ENCODE measurements at regions of chr17 and their contacts with region 1.

Region 1: DNA sequence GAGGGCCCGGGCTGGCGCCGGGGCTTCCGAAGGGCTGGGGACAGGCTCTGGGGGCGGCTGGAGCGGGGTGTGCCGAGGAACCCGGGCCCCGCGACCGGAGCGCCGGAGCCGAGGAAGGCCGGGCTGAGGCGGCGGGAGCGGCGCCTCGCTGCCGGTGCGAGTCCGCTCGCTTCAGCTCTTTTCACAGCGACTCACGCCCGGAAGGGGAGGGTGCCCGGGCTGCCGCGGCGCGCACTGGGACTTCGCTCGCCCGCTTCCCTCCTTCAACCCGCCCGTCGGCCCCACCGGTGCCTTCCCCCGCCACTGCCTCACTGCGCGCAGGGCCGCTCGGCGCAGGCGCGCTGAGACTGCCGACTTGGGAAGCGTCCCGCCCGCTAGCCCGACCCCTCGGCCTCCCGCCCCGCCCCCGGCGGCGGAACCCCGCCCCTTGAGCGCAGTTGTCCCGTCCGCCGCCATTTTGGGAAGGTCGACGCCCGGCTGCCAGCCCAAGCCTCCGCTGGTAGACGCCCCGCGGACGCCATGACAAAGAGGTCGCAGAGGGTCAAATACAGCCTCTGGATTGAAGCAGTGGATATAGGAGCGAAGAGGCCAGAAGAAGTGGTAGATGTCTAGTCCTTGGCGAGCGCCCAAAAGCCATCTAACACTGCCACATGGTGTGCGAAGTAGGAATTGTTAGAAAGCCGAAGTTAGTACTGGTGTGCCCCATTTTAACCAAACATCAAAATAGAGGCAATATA is at the start of gene UBE2G1:
- DNase-seq: peak; percentile 88 to 98
- H3K4me3 ChIP-seq: peak within 1 kb of the TSS; percentile 72
- H3K27ac ChIP-seq: peak within 1 kb of the TSS; percentile 60
- H3K4me1 ChIP-seq: peaks cover 17% of the 10 kb centered on the region
- H3K27me3 ChIP-seq: no peaks in the 10 kb centered on the region
- CTCF ChIP-seq: peak; percentile 41
- total RNA-seq, gene UBE2G1: 104 and 111 TPM in 2 replicates

Region 2: GRCh38 chr17:4304417-4305027 is 62.0 kb before region 1 on chr17:
- CTCF ChIA-PET with region 1: no interaction called
- POLR2A ChIA-PET with region 1: no interaction called
- intact Hi-C with region 1: loop called (anchors 10 kb)
- DNase-seq: peak in 1 of 2 experiments; percentile 11
- H3K4me3 ChIP-seq: no peak overlapping the region
- H3K27ac ChIP-seq: no peak overlapping the region
- H3K4me1 ChIP-seq: no peaks in the 10 kb centered on the region
- H3K27me3 ChIP-seq: no peaks in the 10 kb centered on the region
- CTCF ChIP-seq: peak; percentile 84

Region 3: GRCh38 chr17:4317610-4318009 is 48.9 kb before region 1 on chr17:
- CTCF ChIA-PET with region 1: no interaction called
- POLR2A ChIA-PET with region 1: no interaction called
- intact Hi-C with region 1: no loop called
- DNase-seq: no peak
- H3K4me3 ChIP-seq: no peak overlapping the region
- H3K27ac ChIP-seq: no peak overlapping the region
- H3K4me1 ChIP-seq: peaks cover 9% of the 10 kb centered on the region
- H3K27me3 ChIP-seq: no peaks in the 10 kb centered on the region
- CTCF ChIP-seq: no peak

Region 4: DNA sequence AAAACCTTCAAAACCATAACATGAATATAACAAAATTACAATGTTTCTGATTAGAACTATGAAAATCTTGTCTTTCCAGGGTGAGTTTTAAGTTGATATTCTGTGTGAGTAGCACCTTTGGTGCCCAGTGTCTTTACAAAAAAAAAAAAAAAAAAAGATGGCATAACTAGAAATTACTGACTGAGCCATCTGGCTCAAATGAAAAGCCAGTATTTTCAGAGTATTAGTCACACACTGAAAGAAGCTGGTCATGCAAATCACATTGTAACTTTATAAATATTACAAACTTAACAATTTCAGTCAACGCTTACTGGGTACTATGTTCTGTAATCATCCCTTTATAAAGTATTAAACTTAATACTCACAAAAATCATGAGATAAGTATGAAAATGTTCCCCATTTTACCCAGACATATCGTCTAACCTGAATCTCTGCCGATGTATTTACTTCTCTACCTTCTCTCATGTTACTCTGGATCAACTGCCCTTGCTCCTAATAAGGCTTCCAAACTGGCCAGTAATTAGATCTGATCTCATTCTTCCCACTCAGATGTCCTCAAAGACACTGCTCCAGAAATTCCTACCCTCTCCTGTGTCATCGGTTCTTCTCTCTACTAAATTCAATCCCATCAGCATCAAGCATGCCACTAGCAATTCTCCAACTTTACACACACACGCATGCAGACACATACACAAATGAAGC is 25.4 kb before region 1 on chr17:
- CTCF ChIA-PET with region 1: no interaction called
- POLR2A ChIA-PET with region 1: no interaction called
- intact Hi-C with region 1: no loop called
- DNase-seq: no peak
- H3K4me3 ChIP-seq: no peak overlapping the region
- H3K27ac ChIP-seq: no peak overlapping the region
- H3K4me1 ChIP-seq: peaks cover 12% of the 10 kb centered on the region
- H3K27me3 ChIP-seq: no peaks in the 10 kb centered on the region
- CTCF ChIP-seq: no peak

Region 5: DNA sequence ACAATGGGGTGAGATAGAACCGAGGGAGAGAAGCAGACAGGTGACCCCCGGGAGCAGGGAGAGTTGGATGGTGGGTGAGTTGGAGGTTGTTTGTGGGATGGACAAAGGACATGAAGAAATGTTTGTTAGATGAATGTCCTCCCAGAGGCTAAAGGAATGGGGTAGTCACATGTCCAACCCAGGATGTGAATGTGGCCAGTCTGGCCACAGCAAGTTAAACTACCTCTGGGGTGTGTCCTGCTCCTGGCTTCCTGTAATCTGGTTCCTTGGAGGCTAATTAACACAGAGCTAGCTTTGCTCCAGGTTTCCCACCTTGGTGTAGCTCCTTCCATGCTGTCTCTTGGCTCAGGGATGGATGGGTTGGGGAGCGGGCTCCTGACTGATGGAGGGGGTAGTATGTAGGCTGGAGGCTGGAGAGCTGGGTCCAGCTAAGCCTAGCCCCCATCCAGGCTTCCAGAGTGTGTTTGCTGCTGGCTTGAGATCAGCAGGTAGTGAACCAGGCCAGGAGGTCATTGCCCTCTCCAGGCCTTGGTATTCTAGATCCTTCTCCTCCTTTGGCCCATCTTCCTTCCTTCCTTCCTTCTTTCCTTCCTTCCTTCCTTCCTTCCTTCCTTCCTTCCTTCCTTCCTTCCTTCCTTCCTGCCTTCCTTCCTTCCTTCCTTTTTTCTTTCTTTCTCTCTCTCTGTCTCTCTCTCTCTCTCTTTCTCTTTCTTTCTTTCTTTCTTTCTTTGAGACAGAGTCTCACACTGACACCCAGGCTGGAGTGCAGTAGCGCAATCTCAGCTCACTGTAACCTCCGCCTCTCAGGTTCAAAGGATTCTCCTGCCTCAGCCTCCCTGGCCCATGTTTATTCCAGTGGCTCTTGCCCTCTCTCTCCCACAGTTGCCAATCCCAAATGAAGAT is 28.0 kb after region 1 on chr17:
- CTCF ChIA-PET with region 1: no interaction called
- POLR2A ChIA-PET with region 1: no interaction called
- intact Hi-C with region 1: loop called (anchors 1 kb)
- DNase-seq: peak; percentile 70 to 95
- H3K4me3 ChIP-seq: peak overlapping the region; percentile 27; the same call in 1 of the 2 replicates
- H3K27ac ChIP-seq: peak overlapping the region; percentile 85
- H3K4me1 ChIP-seq: peaks cover 47% of the 10 kb centered on the region
- H3K27me3 ChIP-seq: no peaks in the 10 kb centered on the region
- CTCF ChIP-seq: no peak

Region 6: DNA sequence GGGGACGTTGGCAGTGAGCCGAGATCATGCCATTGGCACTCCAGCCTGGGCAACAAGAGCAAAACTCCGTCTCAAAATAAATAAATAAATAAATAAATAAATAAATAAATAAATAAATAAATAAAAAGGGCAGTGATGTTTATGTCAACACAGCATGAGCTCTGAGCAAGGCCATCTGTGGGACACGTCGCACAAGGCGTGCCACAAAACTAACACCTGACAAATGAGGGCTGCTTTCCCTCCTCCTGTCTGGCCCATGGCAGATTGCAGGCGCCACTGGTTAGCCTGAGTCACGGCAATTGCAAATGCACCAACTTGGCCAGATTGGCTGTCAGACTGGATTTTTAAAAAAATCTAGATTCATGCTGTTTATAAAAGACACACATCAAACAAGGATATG is 41.4 kb after region 1 on chr17:
- CTCF ChIA-PET with region 1: interaction called, 13 read pairs
- POLR2A ChIA-PET with region 1: no interaction called
- intact Hi-C with region 1: loop called (anchors 5 kb)
- DNase-seq: peak; percentile 48 to 82
- H3K4me3 ChIP-seq: no peak overlapping the region
- H3K27ac ChIP-seq: 0 out of 2 replicates have a peak overlapping the region, but pooled peaks have one; percentile 6
- H3K4me1 ChIP-seq: peaks cover 4% of the 10 kb centered on the region; the same call in 1 of the 2 replicates
- H3K27me3 ChIP-seq: no peaks in the 10 kb centered on the region
- CTCF ChIP-seq: no peak

Region 7: DNA sequence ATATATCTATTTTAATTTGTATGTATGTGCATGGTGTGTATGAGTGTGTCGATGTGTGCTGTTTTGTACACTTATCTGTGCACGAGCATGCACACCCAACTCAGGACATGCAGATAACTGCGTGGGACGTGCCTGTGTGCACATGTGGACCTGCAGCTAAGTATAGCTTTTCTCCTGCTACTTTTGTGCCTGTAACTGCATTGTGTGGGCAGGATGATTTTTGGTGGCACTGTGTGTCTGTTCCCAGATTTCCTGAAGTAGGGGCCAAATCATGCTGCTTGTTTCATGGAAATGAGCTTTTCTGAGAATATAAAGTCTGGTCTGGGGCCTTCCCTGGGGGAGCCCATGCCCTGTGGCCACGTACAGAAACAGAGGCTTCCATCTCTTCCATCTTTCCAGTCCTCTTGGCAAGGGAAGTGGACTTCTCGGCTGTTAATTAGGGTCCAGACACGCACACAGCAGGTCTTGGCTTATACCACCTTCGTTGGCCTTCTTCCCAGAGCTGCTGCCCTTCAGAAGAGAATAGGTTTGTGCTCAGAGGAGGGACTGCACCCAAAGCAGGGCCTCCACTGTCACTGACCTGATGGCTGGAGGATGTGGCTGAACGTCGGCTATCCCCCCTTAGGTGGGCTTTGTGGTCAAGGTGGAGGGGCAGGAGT is 97.5 kb after region 1 on chr17:
- CTCF ChIA-PET with region 1: no interaction called
- POLR2A ChIA-PET with region 1: no interaction called
- intact Hi-C with region 1: no loop called
- DNase-seq: no peak
- H3K4me3 ChIP-seq: no peak overlapping the region
- H3K27ac ChIP-seq: no peak overlapping the region
- H3K4me1 ChIP-seq: no peaks in the 10 kb centered on the region; the same call in 1 of the 2 replicates
- H3K27me3 ChIP-seq: no peaks in the 10 kb centered on the region
- CTCF ChIP-seq: no peak